Motor neuron (in vitro differentiated cells): ENCODE measurements at regions of chr17 and their contacts with region 1.

Region 1: GRCh38 chr17:30074730-30075129 is 41.9 kb upstream of the NSRP1 start:
- ATAC-seq: peak in 3 of 8 experiments; percentile 97 to 99 (median 97)
- H3K4me3 ChIP-seq: no peak overlapping the region
- H3K27ac ChIP-seq: no peak overlapping the region
- H3K4me1 ChIP-seq: no peaks in the 10 kb centered on the region

Region 2: DNA sequence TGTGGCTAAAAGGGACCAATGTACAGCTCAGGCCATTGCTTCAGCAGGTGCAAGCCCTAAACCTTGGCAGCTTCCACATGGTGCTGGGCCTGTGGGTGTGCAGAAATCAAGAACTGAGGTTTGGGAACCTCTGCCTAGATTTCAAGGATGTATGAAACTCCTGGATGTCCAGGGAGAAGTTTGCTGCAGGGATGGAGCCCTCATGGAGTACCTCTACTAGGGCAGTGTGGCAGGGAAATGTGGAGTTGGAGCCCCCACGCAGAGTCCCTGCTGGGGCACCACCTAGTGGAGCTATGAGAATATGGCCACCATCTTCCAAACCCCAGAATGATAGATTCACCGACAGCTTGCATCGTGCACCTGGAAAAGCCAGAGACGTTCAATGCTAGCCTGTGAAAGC is 120.3 kb before region 1 on chr17:
- in situ Hi-C with region 1: loop called in 1 of 9 experiments (anchors 25 kb)
- ATAC-seq: no peak
- H3K4me3 ChIP-seq: no peak overlapping the region
- H3K27ac ChIP-seq: no peak overlapping the region
- H3K4me1 ChIP-seq: no peaks in the 10 kb centered on the region